ENCODE measurements at regions of chr9 and their contacts with region 1.

Region 1: GRCh38 chr9:136482793-136483588 is at the start of gene SEC16A:
- DNase-seq: peak; percentile 99
- ATAC-seq: peak; percentile 68
- H3K4me3 Mint-ChIP-seq: peak within 1 kb of the TSS; percentile 93
- H3K27ac Mint-ChIP-seq: peak within 1 kb of the TSS; percentile 99
- H3K4me1 Mint-ChIP-seq: peaks cover 31% of the 10 kb centered on the region
- H3K27me3 Mint-ChIP-seq: no peaks in the 10 kb centered on the region
- total RNA-seq, gene SEC16A: 88.0 to 96.7 TPM

Region 2: DNA sequence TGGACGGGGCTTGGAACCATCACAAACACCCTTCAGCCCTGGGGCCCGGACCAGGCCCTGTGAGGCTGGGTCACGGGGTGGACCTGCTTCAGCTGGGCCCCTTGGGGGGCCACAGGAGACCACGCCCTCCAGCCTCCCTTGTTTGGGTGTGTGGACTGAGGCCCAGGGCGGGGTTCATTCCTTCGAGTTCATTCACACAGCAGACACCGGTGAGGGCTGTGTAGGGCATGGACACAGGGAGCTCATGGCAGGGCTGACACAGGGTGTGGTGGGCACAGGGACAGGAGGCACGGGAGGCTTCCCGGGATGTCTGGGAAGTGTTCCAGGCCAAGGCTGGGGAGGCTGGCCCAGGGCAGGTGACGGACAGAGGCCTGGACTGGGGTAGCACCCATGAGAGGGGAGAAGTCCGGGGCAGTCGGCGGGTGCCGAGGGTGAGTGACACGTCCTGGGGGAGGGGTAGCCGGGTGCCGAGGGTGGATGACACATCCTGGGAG is 128.4 kb before region 1 on chr9:
- CTCF ChIA-PET with region 1: no interaction called
- DNase-seq: no peak
- ATAC-seq: no peak
- H3K4me3 Mint-ChIP-seq: no peak overlapping the region
- H3K27ac Mint-ChIP-seq: no peak overlapping the region
- H3K4me1 Mint-ChIP-seq: no peaks in the 10 kb centered on the region
- H3K27me3 Mint-ChIP-seq: no peaks in the 10 kb centered on the region

Region 3: GRCh38 chr9:136385015-136385414 is 98.0 kb before region 1 on chr9:
- CTCF ChIA-PET with region 1: no interaction called
- DNase-seq: peak; percentile 82
- ATAC-seq: peak; percentile 77
- H3K4me3 Mint-ChIP-seq: peak overlapping the region; percentile 17
- H3K27ac Mint-ChIP-seq: peak overlapping the region; percentile 84
- H3K4me1 Mint-ChIP-seq: peaks cover 30% of the 10 kb centered on the region
- H3K27me3 Mint-ChIP-seq: no peaks in the 10 kb centered on the region

Region 4: DNA sequence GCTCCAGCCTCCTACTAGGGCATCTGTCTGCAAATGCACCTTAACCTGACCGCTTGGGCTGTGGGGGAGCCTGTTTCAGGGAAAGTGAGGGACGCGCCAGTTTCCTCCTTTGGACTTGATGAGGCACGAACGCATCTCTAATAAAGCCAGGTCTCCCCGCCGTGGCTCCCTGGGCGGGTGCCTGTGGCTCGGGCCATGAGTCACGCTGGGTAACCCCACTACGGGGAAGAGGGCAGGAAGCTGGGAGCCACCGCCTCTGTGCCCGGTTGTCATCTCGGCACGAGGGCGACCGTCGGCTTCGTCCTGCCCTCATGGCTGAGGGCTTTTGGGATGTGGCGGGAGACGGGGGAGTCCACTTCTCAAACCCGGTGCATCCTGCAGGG is 50.8 kb after region 1 on chr9:
- CTCF ChIA-PET with region 1: interaction called, 33 read pairs
- DNase-seq: peak; percentile 88
- ATAC-seq: peak; percentile 68
- H3K4me3 Mint-ChIP-seq: peak overlapping the region; percentile 40
- H3K27ac Mint-ChIP-seq: peak overlapping the region; percentile 90
- H3K4me1 Mint-ChIP-seq: peaks cover 53% of the 10 kb centered on the region
- H3K27me3 Mint-ChIP-seq: no peaks in the 10 kb centered on the region

Region 5: GRCh38 chr9:136631038-136632000 is 148.3 kb after region 1 on chr9:
- CTCF ChIA-PET with region 1: interaction called, 125 read pairs
- DNase-seq: peak; percentile 82
- ATAC-seq: peak; percentile 88
- H3K4me3 Mint-ChIP-seq: no peak overlapping the region
- H3K27ac Mint-ChIP-seq: no peak overlapping the region
- H3K4me1 Mint-ChIP-seq: no peaks in the 10 kb centered on the region
- H3K27me3 Mint-ChIP-seq: peaks cover 17% of the 10 kb centered on the region

Region 6: DNA sequence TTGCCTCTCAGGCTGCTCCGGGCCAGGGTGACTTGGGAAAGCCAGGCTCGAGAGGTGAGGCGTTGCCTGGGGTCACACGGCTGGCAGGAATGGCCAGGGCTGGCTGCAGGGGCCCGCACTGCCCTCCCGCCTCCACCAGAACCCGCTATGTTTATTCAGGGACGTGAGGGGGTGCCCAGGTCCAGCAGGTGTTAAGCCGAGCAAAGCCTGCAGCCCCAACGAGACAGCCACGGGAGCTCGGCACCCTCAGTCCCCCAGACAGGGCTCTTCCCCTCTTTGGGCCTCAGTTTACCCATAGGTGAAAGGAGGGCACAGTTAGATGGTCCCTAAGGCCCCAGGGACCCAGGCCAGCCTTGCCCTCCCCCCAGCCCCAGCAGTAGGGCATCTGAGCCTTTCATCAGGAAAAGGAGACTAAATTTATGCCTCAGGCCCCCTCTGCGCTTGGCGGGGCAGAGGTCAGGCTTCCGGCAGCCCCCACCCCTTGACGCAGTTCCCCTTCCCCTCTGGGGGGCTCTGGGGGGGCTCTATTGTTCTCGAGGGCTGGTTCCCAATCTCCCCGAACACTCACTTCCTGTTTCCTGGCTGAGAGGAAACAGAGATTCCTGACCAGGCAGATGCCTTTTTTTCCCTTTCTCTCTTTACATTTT is 172.7 kb after region 1 on chr9:
- CTCF ChIA-PET with region 1: interaction called, 12 read pairs
- DNase-seq: no peak
- ATAC-seq: no peak
- H3K4me3 Mint-ChIP-seq: no peak overlapping the region
- H3K27ac Mint-ChIP-seq: no peak overlapping the region
- H3K4me1 Mint-ChIP-seq: peaks cover 5% of the 10 kb centered on the region
- H3K27me3 Mint-ChIP-seq: peaks cover 46% of the 10 kb centered on the region

Region 7: DNA sequence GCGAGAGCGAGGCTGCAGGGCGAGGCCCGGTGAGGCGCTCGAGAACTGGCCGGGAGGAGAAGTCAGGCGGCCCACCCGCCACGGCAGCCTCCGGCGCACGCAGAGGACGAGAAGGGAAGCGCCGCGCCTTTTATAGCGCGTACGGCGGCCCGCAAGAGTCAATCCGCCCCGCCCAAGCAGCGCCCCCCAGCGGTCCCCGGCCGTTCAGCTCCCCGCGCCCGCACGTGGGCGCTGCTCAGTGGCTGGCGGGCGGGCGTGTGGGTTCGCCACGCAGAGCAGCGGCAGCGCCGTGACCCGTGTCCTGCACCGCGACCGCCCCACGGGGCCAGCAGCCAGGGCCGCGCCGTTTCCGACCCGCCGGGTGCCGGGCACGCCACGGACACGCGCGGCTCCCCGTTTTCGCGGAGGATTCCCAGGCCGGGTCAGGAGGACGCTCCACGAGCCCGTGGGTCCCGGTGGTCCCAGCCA is 245.1 kb after region 1 on chr9:
- CTCF ChIA-PET with region 1: interaction called, 13 read pairs
- DNase-seq: peak; percentile 92
- ATAC-seq: peak; percentile 79
- H3K4me3 Mint-ChIP-seq: peak overlapping the region; percentile 92
- H3K27ac Mint-ChIP-seq: no peak overlapping the region
- H3K4me1 Mint-ChIP-seq: peaks cover 38% of the 10 kb centered on the region
- H3K27me3 Mint-ChIP-seq: peaks cover 4% of the 10 kb centered on the region